ENCODE measurements at regions of chr1 and their contacts with region 1.

Region 1: DNA sequence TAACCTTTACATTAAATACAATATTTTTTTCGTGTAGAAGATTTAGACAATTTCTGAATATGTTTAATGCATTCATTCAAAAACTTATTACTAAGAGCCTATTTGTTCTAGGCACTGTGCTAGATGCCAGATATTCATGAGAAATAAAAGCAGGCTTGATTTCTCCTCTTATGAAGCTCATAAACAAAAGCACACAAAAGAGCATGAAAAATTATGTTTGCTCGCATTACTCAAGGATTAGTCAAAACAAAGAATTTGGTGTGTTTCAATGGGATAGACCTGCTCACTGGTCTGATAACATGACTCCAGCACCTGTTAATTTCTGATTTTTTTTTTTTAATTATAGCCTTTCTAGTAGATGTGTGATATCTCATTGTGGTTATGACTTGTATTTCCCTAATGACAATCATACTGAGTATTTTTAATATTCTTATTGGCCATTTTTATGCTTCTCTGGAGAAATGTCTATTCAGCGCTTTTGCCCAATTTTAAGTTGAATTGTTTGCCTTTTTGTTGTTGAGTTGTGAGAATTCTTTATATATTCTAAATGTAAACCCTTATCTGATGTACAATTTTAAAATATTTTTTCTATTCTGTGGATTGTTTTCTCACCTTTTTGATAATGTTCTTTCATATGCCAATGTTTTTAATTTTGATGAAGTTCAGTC is 382.3 kb upstream of the ADGRL4 start:
- DNase-seq: peak; percentile 76
- ATAC-seq: peak; percentile 79
- H3K4me3 ChIP-seq: no peak overlapping the region
- H3K27ac ChIP-seq: 0 out of 2 replicates have a peak overlapping the region, but pooled peaks have one; percentile 18
- H3K4me1 ChIP-seq: peaks cover 24% of the 10 kb centered on the region
- H3K27me3 ChIP-seq: no peaks in the 10 kb centered on the region
- CTCF ChIP-seq: no peak

Region 2: GRCh38 chr1:79235301-79236002 is 153.4 kb before region 1 on chr1:
- CTCF ChIA-PET with region 1: no interaction called
- POLR2A ChIA-PET with region 1: no interaction called
- intact Hi-C with region 1: no loop called
- DNase-seq: peak; percentile 31
- ATAC-seq: peak; percentile 96
- H3K4me3 ChIP-seq: no peak overlapping the region
- H3K27ac ChIP-seq: peak overlapping the region; percentile 42
- H3K4me1 ChIP-seq: peaks cover 13% of the 10 kb centered on the region
- H3K27me3 ChIP-seq: no peaks in the 10 kb centered on the region
- CTCF ChIP-seq: no peak

Region 3: GRCh38 chr1:79323240-79324025 is 65.4 kb before region 1 on chr1:
- CTCF ChIA-PET with region 1: no interaction called
- POLR2A ChIA-PET with region 1: no interaction called
- intact Hi-C with region 1: loop called (anchors 2 kb)
- DNase-seq: peak; percentile 95
- ATAC-seq: peak; percentile 93
- H3K4me3 ChIP-seq: no peak overlapping the region
- H3K27ac ChIP-seq: peak overlapping the region; percentile 79
- H3K4me1 ChIP-seq: peaks cover 20% of the 10 kb centered on the region
- H3K27me3 ChIP-seq: no peaks in the 10 kb centered on the region
- CTCF ChIP-seq: no peak

Measured in PC-3 (cell line).